Activated T-helper 2 cell treated with anti-CD3 and anti-CD28 coated beads, Interferon-gamma antibody, Interleukin-2, Interleukin-4, amounts not matched to agents 10 μg/mL and 5 μg/mL and 100 μg/mL, durations not matched to agents 14 hours and 24 hours and 36 hours (primary cell): ENCODE measurements at regions of chr3 and their contacts with region 1.

Region 1: DNA sequence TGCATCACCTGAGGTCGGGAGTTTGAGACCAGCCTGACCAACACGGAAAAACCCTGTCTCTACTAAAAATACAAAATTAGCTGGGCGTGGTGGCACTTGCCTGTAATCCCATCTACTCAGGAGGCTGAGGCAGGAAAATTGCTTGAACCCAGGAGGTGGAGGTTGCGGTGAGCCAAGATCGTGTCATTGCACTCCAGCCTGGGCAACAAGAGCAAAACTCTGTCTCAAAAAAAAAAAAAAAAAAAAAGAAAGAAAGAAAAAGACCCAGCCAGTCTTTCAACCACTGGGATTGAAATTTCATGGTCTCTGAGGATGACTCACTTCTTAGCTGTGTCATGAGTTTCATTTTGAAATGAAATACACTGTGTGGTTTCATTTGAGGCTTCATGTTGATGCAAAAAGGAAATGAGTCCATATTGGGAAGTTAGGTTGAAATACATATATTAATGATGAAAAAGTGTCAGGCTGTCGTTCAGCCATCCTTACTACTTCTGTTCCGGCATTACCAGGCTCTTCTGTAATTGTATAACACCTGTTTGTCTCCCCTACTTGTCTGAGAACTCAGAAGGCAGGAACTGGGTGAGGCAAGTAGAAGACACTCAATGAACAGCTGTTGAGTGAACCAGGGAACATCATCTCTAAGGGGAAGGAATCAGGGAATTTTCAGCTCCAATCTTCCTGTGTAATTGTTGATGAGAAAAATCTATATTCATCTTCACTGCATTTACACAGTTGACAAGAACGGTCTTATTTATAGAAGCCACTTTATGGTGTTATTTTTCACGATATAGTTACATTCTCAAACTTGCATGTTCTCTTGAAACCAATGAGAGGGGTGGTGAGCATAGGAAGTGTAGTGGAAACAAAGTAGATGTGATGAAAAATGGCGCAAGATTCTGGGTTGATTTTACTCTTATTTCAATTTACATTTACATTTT is 87.4 kb downstream of the NFKBIZ start:
- DNase-seq: peak; percentile 18
- H3K4me3 Mint-ChIP-seq: peak overlapping the region; percentile 46
- H3K27ac Mint-ChIP-seq: peak overlapping the region; percentile 71
- H3K4me1 Mint-ChIP-seq: peaks cover 33% of the 10 kb centered on the region
- H3K27me3 Mint-ChIP-seq: peaks cover 16% of the 10 kb centered on the region

Region 2: DNA sequence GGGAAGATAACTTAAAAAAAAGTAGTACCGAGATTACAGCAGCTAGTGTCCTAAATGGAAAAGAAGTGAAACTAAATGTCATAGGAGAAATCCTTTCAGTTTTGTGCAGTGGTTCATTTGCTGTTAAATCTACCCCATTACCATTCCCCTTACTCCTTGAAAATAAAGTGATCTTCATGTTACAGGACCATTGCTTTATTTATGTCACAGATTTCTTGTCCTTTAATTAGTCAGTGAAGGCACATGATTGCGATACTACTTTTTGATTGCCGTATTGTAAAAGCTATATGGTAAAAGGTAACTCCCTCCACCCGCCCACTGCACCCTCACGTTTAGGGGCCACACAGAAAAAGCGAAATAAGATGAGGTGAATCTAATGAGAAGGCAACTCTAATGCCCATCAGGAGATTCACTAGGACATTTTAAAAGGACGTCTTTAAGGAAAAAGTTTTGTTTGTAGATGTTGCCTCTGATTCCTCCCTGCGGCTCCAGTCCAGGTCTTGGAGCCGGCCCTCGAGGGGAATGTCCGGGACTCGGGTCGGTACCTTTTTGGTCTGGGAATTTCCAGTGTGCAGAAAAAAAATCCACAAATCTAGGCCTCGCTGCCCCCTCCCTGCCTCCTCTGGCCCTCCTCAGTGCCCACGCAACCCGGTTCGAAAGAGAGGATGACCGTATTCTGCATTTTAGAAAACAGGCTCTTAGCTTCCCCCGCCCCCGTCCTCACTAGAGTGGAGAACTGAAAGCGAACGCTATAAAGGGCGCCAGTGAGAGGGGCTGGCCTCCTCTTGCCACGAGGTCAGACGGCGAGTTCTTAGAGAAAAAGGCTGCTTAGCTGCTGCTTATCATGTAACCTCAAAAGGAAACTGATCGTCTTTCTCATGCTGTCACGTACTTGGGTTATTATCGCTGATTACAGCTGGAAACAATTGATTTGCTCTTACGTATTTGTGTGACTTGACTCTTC is 109.2 kb before region 1 on chr3:
- intact Hi-C with region 1: loop called (anchors 1 kb)
- DNase-seq: peak; percentile 77
- H3K4me3 Mint-ChIP-seq: peak overlapping the region; percentile 93
- H3K27ac Mint-ChIP-seq: peak overlapping the region; percentile 98
- H3K4me1 Mint-ChIP-seq: peaks cover 55% of the 10 kb centered on the region
- H3K27me3 Mint-ChIP-seq: no peaks in the 10 kb centered on the region

Region 3: GRCh38 chr3:101988591-101988990 is 51.9 kb after region 1 on chr3:
- intact Hi-C with region 1: loop called (anchors 1 kb)
- DNase-seq: peak; percentile 15
- H3K4me3 Mint-ChIP-seq: no peak overlapping the region
- H3K27ac Mint-ChIP-seq: peak overlapping the region; percentile 92
- H3K4me1 Mint-ChIP-seq: peaks cover 62% of the 10 kb centered on the region
- H3K27me3 Mint-ChIP-seq: peaks cover 13% of the 10 kb centered on the region

Region 4: DNA sequence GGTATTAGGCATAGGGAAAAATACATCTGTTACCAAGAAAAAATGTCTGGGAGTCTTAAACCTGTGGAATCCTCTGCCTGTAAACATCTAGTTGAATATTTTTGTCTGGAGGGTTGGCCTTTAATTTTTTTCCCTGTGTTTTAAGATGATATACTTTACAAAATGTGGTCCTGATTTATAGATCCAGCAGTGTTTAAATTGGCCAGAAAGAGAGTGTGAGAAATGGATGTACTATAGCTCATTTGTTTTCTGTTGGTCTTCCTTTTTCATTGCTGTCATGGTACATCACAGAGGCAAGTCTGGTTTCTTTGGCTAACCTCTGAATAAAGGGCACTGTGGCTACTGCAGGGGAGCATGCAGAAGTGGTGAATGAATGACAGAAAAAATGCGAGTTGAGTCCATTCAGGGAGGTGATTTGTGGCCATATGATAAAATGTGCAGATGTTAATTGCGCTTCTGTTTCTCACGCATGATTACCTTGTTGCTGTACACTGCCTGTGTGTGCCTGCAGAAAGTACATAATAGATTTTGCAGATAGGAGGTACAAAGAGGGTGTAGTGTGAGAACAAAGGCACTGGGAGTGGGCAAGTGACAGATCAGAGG is 62.6 kb after region 1 on chr3:
- intact Hi-C with region 1: no loop called
- DNase-seq: no peak
- H3K4me3 Mint-ChIP-seq: no peak overlapping the region
- H3K27ac Mint-ChIP-seq: no peak overlapping the region
- H3K4me1 Mint-ChIP-seq: peaks cover 44% of the 10 kb centered on the region
- H3K27me3 Mint-ChIP-seq: peaks cover 2% of the 10 kb centered on the region

Region 5: DNA sequence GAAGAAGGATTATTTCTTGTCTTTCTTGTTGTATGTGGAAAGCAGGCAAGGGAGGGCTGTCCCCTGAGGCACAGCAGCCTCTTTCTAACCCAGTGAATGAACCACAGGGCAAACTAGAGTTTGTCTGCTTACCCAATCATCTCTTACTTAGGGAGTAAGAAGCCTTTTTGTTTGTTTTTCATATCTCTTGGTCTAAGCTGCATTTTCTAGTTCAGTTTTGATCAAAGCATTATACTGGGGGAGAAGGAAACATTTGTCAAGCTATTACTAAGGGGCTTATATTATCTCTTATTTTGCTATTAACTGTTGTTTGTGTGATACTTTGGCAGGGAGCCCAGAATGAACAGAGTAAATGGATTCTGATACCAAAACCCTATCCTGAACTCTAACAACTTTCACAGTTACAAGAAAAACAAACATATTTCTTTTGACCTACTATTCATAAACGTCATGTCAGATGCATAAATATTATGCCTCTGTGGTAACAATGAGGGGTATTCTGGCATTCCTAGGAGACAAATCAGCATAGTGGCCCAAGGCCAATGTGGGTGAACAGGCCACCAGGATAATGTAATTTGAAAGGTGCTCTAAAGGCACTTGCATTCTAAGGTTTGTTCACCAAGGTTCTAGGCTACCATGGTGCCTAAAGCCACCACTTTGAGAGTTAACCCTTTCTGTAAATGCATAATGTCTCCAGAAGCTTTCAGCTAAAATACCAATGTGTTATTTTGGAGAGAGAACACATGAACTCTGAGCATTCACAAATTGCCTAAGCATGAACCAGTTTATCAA is 226.5 kb after region 1 on chr3:
- intact Hi-C with region 1: loop called (anchors 5 kb)
- DNase-seq: no peak
- H3K4me3 Mint-ChIP-seq: no peak overlapping the region
- H3K27ac Mint-ChIP-seq: peak overlapping the region; percentile 46
- H3K4me1 Mint-ChIP-seq: peaks cover 20% of the 10 kb centered on the region
- H3K27me3 Mint-ChIP-seq: no peaks in the 10 kb centered on the region